ENCODE measurements at regions of chr12 and their contacts with region 1.

Region 1: DNA sequence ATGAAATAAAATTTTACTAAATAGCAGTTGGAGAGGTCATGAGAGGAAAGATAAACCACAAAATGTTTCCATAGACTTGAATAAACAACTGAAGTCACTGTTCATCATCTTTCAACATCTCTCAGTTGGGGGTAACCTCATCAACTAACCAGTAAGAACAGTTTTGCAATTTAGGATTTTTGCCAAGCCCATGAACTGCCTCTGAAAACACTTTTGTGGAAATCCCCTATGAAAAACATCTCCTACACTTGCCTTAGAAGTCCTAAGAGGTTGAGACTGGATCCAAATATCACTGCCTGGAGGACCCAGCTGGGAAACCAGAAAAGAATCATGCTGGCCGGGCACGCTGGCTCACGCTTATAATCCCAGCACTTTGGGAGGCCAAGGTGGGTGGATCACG is 273.1 kb downstream of the C12orf50 start:
- DNase-seq: peak; percentile 95
- H3K4me3 Mint-ChIP-seq: no peak overlapping the region
- H3K27ac Mint-ChIP-seq: peak overlapping the region; percentile 89
- H3K4me1 Mint-ChIP-seq: peaks cover 20% of the 10 kb centered on the region
- H3K27me3 Mint-ChIP-seq: no peaks in the 10 kb centered on the region
- CTCF ChIP-seq: no peak

Region 2: GRCh38 chr12:87779016-87779415 is 22.9 kb after region 1 on chr12:
- CTCF ChIA-PET with region 1: no interaction called
- POLR2A ChIA-PET with region 1: no interaction called
- intact Hi-C with region 1: no loop called
- DNase-seq: peak; percentile 59
- H3K4me3 Mint-ChIP-seq: no peak overlapping the region
- H3K27ac Mint-ChIP-seq: peak overlapping the region; percentile 56
- H3K4me1 Mint-ChIP-seq: peaks cover 25% of the 10 kb centered on the region
- H3K27me3 Mint-ChIP-seq: no peaks in the 10 kb centered on the region
- CTCF ChIP-seq: no peak

Region 3: DNA sequence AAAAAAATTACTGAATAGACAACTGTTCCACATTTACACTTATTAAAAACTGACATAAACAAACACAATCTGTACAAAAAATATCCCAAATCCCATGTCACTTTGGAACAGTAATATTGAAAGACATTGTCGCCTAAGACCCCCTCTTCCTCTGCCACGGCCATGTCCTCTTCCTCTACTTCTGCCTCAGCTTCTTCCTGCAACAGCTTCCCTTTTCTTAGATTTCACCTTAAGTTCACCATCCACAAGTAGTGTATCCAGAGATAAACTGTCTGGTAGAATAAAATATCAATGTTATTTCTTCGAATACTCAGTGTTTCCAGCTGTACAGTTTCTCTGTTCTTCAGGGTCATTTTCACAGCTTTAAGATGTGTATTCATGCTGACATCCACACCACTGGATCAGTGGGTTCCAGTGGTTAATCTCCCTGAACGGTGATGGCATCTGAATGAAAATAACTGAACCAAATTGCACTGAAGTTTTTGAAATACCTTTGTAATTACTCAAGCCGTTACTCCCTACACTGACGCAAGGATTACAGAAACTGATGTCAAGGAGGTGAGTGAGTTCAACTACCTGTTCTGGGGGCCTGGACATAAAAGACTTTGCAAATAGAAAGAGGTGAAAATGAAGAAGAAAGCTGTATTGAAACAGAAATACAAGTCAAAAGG is 64.5 kb after region 1 on chr12:
- CTCF ChIA-PET with region 1: no interaction called
- POLR2A ChIA-PET with region 1: no interaction called
- intact Hi-C with region 1: loop called (anchors 5 kb)
- DNase-seq: peak; percentile 64
- H3K4me3 Mint-ChIP-seq: peak overlapping the region; percentile 62
- H3K27ac Mint-ChIP-seq: peak overlapping the region; percentile 97
- H3K4me1 Mint-ChIP-seq: peaks cover 27% of the 10 kb centered on the region
- H3K27me3 Mint-ChIP-seq: no peaks in the 10 kb centered on the region
- CTCF ChIP-seq: no peak

Measured in MCF 10A (cell line).